K562 (cell line): ENCODE measurements at regions of chr6 and their contacts with region 1.

Region 1: GRCh38 chr6:7389451-7390225 is at the starts of genes CAGE1 and RIOK1:
- DNase-seq: peak; percentile 95 to 98 (median 96)
- ATAC-seq: peak; percentile 98
- H3K4me3 ChIP-seq: peak within 1 kb of the TSS; percentile 67
- H3K27ac ChIP-seq: peak within 1 kb of the TSS; percentile 77
- H3K4me1 ChIP-seq: peaks cover 20 to 21% of the 10 kb centered on the region in 2 experiments; a peak in 4 of 5 replicates
- H3K27me3 ChIP-seq: no peaks in the 10 kb centered on the region
- CTCF ChIP-seq: peak; percentile 28 to 53 (median 36); a peak in 4 of 6 replicates
- EP300 ChIP-seq: no peak; the same call in 1 of the 2 replicates
- POLR2A ChIP-seq: peak; percentile 98
- RAD21 ChIP-seq: no peak; a peak in 2 of 4 replicates
- polyA plus RNA-seq, gene CAGE1: not detected
- polyA plus RNA-seq, gene RIOK1: 51.7 to 101 TPM

Region 2: DNA sequence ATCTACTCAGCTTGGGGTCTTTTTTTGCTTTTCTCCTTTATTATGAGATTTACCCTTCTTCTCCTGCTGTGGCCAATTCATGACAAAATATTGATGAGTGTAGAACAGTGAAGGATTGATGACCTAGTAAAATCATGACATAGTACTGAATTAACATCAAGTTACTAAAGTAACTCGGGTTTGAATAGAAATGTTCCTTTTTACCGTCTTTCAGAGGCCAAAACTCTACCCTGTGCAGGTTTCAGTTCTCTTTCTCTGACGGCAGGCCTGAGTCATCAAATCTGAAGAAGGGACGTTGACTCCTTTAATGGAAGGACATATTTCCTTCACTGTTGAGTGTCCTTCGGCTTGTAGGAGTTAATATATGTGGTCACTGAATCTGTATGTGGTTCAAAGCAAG is 201.1 kb before region 1 on chr6:
- CTCF ChIA-PET with region 1: no interaction called
- POLR2A ChIA-PET with region 1: no interaction called
- in situ Hi-C with region 1: no loop called
- intact Hi-C with region 1: no loop called
- DNase-seq: no peak
- ATAC-seq: no peak
- H3K4me3 ChIP-seq: no peak overlapping the region
- H3K27ac ChIP-seq: no peak overlapping the region
- H3K4me1 ChIP-seq: no peaks in the 10 kb centered on the region
- H3K27me3 ChIP-seq: no peaks in the 10 kb centered on the region
- CTCF ChIP-seq: no peak
- EP300 ChIP-seq: no peak
- POLR2A ChIP-seq: no peak
- RAD21 ChIP-seq: no peak

Region 3: DNA sequence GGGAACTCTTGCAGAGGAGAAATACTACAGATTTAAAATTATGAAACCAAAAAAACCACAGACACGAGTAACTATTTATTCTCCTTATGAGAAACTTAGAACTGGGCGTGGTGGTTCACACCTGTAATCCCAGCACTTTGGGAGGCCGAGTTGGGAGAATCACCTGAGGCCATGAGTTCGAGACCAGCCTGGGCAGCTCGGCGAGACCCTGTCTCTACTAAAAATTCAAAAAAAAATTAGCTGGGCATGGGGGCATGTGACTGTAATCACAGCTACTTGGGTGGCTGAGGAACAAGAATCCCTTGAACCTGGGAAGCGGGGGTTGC is 113.5 kb before region 1 on chr6:
- CTCF ChIA-PET with region 1: no interaction called
- POLR2A ChIA-PET with region 1: interaction called, 4 read pairs
- in situ Hi-C with region 1: no loop called
- intact Hi-C with region 1: loop called (anchors 1 kb)
- DNase-seq: no peak
- ATAC-seq: no peak
- H3K4me3 ChIP-seq: no peak overlapping the region
- H3K27ac ChIP-seq: no peak overlapping the region
- H3K4me1 ChIP-seq: peaks cover 0 to 7% of the 10 kb centered on the region in 2 experiments; a peak in 1 of 5 replicates
- H3K27me3 ChIP-seq: peaks cover 8 to 13% of the 10 kb centered on the region in 2 experiments; a peak in 4 of 5 replicates
- CTCF ChIP-seq: no peak
- EP300 ChIP-seq: no peak
- POLR2A ChIP-seq: no peak
- RAD21 ChIP-seq: no peak

Region 4: DNA sequence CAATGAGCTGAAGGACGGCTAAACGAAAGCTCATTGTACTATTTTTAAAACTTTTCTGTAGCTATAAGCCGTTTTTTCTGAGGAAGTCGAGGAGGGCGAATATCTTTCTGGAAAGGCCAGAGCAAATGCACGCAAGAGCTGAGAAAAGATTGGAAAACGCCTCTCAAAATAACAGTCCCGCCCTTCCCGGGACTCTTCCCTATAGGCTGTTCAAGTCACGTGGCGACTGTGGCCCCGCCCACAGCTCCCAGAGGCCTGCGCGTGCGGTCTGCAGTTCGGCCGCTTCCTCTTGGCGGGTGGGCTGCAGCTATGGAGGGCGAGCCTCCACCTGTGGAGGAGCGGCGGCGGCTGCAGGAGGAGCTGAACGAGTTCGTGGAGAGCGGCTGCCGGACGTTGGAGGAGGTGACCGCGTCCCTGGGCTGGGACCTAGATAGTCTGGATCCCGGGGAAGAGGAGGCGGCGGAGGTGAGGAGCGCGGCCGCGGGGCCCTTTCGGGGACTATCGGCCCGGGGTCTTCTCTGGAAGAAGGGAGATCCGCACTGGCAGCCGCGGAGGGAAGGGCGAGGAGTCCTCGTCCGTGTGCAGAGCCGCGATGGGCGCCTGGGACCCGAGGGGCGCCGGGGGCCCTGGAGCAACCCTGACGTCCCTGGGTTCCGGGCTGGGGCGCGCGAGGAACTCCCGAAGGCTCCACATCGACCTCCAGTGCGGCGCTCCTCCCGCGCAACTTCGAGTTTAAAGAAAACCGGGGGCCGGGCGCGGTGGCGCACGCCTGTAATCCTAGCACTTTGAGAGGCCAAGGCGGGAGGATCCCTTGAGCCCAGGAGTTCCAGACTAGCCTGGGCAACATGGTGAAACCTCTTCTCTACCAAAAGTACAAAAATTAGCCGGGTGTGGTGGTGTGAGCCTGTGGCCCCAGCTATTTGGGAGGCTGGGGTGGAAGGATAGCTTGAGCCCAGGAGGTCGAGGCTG is 200.6 kb after region 1 on chr6 and contains the start of gene SNRNP48:
- CTCF ChIA-PET with region 1: no interaction called
- POLR2A ChIA-PET with region 1: interaction called, 4 read pairs
- in situ Hi-C with region 1: no loop called
- intact Hi-C with region 1: loop called (anchors 5 kb)
- DNase-seq: peak; percentile 95 to 98 (median 98)
- ATAC-seq: peak; percentile 99
- H3K4me3 ChIP-seq: peak within 1 kb of the TSS; percentile 89
- H3K27ac ChIP-seq: peak within 1 kb of the TSS; percentile 76
- H3K4me1 ChIP-seq: peaks cover 8 to 12% of the 10 kb centered on the region in 2 experiments; a peak in 4 of 5 replicates
- H3K27me3 ChIP-seq: peaks cover 0 to 4% of the 10 kb centered on the region in 2 experiments; a peak in 1 of 5 replicates
- CTCF ChIP-seq: no peak
- EP300 ChIP-seq: no peak
- POLR2A ChIP-seq: peak; percentile 98
- RAD21 ChIP-seq: no peak; a peak in 1 of 4 replicates
- polyA plus RNA-seq, gene SNRNP48: 6.2 to 8.7 TPM

Region 5: GRCh38 chr6:7833751-7834070 is 444.1 kb after region 1 on chr6:
- CTCF ChIA-PET with region 1: no interaction called
- POLR2A ChIA-PET with region 1: no interaction called
- in situ Hi-C with region 1: no loop called
- intact Hi-C with region 1: no loop called
- DNase-seq: no peak
- ATAC-seq: no peak
- H3K4me3 ChIP-seq: no peak overlapping the region
- H3K27ac ChIP-seq: no peak overlapping the region
- H3K4me1 ChIP-seq: no peaks in the 10 kb centered on the region
- H3K27me3 ChIP-seq: peaks cover 14 to 33% of the 10 kb centered on the region in 2 experiments
- CTCF ChIP-seq: no peak
- EP300 ChIP-seq: no peak
- POLR2A ChIP-seq: no peak
- RAD21 ChIP-seq: no peak